CD4-positive, alpha-beta T cell (primary cell): ENCODE measurements at regions of chr4 and their contacts with region 1.

Region 1: GRCh38 chr4:10018818-10019461 is 2.4 kb downstream of the SLC2A9 start:
- DNase-seq: peak; percentile 88 to 97 (median 90)
- ATAC-seq: peak; percentile 99
- H3K4me3 ChIP-seq: peak overlapping the region; percentile 56
- H3K4me3 Mint-ChIP-seq: peak overlapping the region; percentile 83
- H3K27ac ChIP-seq: peak overlapping the region; percentile 8 to 62
- H3K27ac Mint-ChIP-seq: peak overlapping the region; percentile 95
- H3K4me1 ChIP-seq: peaks cover 20% of the 10 kb centered on the region
- H3K4me1 Mint-ChIP-seq: peaks cover 15% of the 10 kb centered on the region
- H3K27me3 ChIP-seq: no peaks in the 10 kb centered on the region
- H3K27me3 Mint-ChIP-seq: no peaks in the 10 kb centered on the region
- CTCF ChIP-seq: peak; percentile 96

Region 2: GRCh38 chr4:9762823-9763475 is 256.0 kb before region 1 on chr4:
- CTCF ChIA-PET with region 1: no interaction called
- POLR2A ChIA-PET with region 1: no interaction called
- intact Hi-C with region 1: loop called (anchors 2 to 5 kb)
- DNase-seq: peak in 6 of 14 experiments; percentile 13 to 65 (median 32)
- ATAC-seq: no peak
- H3K4me3 ChIP-seq: no peak overlapping the region
- H3K4me3 Mint-ChIP-seq: no peak overlapping the region
- H3K27ac ChIP-seq: no peak overlapping the region
- H3K27ac Mint-ChIP-seq: no peak overlapping the region
- H3K4me1 ChIP-seq: no peaks in the 10 kb centered on the region
- H3K4me1 Mint-ChIP-seq: no peaks in the 10 kb centered on the region
- H3K27me3 ChIP-seq: no peaks in the 10 kb centered on the region
- H3K27me3 Mint-ChIP-seq: peaks cover 20% of the 10 kb centered on the region
- CTCF ChIP-seq: peak; percentile 34

Region 3: DNA sequence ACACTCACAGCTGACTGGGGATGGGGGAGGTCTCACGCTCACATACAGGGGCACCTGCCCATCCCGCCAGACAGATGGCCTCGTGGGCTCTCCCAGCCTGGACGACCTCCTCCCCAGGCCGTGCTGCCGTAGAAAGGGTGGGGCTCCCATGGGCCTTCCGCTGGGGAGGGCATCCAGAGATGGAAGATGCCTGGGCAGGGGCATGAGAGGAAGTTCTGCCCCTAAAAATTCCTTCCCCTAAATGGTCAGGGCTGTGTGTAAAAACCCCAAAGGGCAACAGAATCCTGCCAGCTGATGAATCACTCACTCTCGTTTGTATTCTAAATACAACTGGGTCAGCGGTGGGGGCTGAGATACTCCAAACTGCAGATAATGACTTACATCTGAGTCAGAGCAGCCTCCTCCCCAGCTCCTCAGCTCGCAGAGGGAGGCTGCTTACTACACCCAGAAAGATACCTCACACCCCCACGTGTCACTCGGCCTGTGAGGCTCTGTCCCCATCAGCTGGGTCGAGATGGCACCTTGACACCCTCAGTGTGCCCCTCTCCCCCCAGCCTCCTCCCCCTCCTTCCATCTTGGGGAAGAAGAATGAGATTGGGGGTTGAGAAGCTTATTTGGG is 87.6 kb after region 1 on chr4:
- CTCF ChIA-PET with region 1: interaction called, 3 read pairs
- POLR2A ChIA-PET with region 1: no interaction called
- intact Hi-C with region 1: loop called in 1 of 2 experiments (anchors 5 kb)
- DNase-seq: peak in 13 of 14 experiments; percentile 47 to 86 (median 67)
- ATAC-seq: peak; percentile 78
- H3K4me3 ChIP-seq: peak overlapping the region; percentile 3
- H3K4me3 Mint-ChIP-seq: peak overlapping the region; percentile 74
- H3K27ac ChIP-seq: peak overlapping the region; percentile 69 to 74
- H3K27ac Mint-ChIP-seq: peak overlapping the region; percentile 99
- H3K4me1 ChIP-seq: peaks cover 100% of the 10 kb centered on the region
- H3K4me1 Mint-ChIP-seq: peaks cover 100% of the 10 kb centered on the region
- H3K27me3 ChIP-seq: no peaks in the 10 kb centered on the region
- H3K27me3 Mint-ChIP-seq: no peaks in the 10 kb centered on the region
- CTCF ChIP-seq: no peak

Region 4: GRCh38 chr4:10212400-10212799 is 193.5 kb after region 1 on chr4:
- CTCF ChIA-PET with region 1: no interaction called
- POLR2A ChIA-PET with region 1: no interaction called
- intact Hi-C with region 1: no loop called
- DNase-seq: no peak
- ATAC-seq: no peak
- H3K4me3 ChIP-seq: no peak overlapping the region
- H3K4me3 Mint-ChIP-seq: no peak overlapping the region
- H3K27ac ChIP-seq: no peak overlapping the region
- H3K27ac Mint-ChIP-seq: no peak overlapping the region
- H3K4me1 ChIP-seq: no peaks in the 10 kb centered on the region
- H3K4me1 Mint-ChIP-seq: no peaks in the 10 kb centered on the region
- H3K27me3 ChIP-seq: no peaks in the 10 kb centered on the region
- H3K27me3 Mint-ChIP-seq: no peaks in the 10 kb centered on the region
- CTCF ChIP-seq: no peak

Region 5: DNA sequence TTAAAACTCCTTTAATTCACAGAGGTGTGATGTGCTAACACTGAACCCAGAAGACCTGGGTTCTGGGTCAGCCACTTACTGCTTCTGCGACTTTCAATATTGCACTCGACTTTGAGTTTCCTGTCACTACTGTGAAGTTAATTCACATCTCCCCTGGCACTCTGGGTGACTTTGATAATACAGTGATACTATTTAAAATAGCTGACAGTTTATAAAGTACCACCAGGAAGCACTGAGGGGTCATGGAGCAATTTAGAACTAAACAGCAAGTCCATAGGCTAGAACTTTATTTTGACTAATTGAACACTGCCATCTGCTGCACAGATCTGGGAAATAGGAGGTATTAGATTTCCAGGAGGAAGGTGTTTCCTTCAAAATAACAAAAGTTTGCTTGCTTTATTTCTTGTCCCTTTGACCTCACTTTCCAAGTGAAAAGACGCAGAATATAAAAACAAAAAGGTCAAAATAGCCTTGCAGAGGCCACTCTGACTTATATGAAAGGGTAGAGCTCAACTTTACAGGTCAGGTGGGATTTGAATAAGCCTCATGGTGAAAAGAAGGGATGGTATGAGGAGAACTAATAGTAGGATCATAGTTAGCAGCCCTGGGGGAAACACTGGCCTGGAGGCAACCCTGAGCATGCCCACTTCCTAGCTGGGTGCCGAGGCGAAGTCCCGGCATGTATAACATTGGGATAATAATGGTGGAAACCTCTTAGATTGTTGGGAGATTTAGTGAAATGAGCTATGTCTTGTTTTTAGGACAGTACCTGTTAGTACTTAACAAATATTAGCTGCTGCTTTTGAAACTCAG is 384.9 kb after region 1 on chr4:
- CTCF ChIA-PET with region 1: no interaction called
- POLR2A ChIA-PET with region 1: no interaction called
- intact Hi-C with region 1: loop called (anchors 1 kb)
- DNase-seq: peak in 4 of 14 experiments; percentile 27 to 48 (median 41)
- ATAC-seq: no peak
- H3K4me3 ChIP-seq: no peak overlapping the region
- H3K4me3 Mint-ChIP-seq: no peak overlapping the region
- H3K27ac ChIP-seq: no peak overlapping the region
- H3K27ac Mint-ChIP-seq: no peak overlapping the region
- H3K4me1 ChIP-seq: no peaks in the 10 kb centered on the region
- H3K4me1 Mint-ChIP-seq: no peaks in the 10 kb centered on the region
- H3K27me3 ChIP-seq: no peaks in the 10 kb centered on the region
- H3K27me3 Mint-ChIP-seq: no peaks in the 10 kb centered on the region
- CTCF ChIP-seq: peak; percentile 46

Region 6: GRCh38 chr4:10535912-10536311 is 517.0 kb after region 1 on chr4:
- CTCF ChIA-PET with region 1: no interaction called
- POLR2A ChIA-PET with region 1: no interaction called
- intact Hi-C with region 1: loop called (anchors 2 to 5 kb)
- DNase-seq: no peak
- ATAC-seq: no peak
- H3K4me3 ChIP-seq: no peak overlapping the region
- H3K4me3 Mint-ChIP-seq: no peak overlapping the region
- H3K27ac ChIP-seq: no peak overlapping the region
- H3K27ac Mint-ChIP-seq: no peak overlapping the region
- H3K4me1 ChIP-seq: no peaks in the 10 kb centered on the region
- H3K4me1 Mint-ChIP-seq: no peaks in the 10 kb centered on the region
- H3K27me3 ChIP-seq: no peaks in the 10 kb centered on the region
- H3K27me3 Mint-ChIP-seq: no peaks in the 10 kb centered on the region
- CTCF ChIP-seq: no peak